Tibial artery (tissue), 4 donors: ENCODE measurements at regions of chr17 and their contacts with region 1.

Region 1: DNA sequence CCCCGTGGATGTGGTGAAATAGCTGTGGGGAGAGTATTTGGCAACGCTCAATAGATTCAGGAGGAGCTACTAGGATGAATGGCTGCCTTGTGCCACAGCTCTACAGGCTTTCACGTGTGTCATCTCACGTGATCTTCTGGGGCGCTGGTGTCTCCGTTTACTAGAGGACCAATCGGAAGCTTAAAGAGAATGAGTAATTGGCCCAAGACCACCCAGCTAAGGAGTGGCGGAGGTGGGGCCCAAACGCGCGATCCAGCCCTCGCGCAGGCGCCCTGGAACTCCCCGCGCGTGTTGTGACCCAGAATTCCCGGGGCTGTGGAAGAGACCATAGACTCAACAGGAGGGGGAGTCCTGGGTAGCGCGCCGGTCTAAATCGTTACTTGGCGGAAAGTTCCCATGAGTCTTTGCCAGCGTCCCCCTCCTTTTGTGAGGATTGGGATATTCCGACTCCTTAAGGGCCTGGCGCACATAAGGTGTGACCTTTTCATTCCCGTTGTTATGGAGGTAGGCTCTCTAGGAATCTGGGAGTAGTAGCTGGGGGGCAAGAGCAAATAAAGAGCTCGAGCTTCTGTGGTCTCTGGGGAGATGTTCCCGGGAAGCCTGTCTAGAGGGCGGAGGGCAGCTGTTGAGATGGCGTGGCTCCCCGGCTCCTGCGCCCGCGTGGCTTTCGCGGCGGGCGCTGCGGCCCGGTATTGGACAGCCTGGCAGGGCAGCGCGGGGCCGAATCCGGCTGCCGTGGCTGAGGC is 23.4 kb downstream of the TRPV2 start:
- DNase-seq: peak; percentile 96 to 98
- H3K4me3 ChIP-seq: peak overlapping the region; percentile 78 to 98
- H3K27ac ChIP-seq: peak overlapping the region; percentile 80 to 83
- H3K4me1 ChIP-seq: peaks cover 0 to 31% (median 30%) of the 10 kb centered on the region in 4 donors
- H3K27me3 ChIP-seq: no peaks in the 10 kb centered on the region
- CTCF ChIP-seq: no peak

Region 2: DNA sequence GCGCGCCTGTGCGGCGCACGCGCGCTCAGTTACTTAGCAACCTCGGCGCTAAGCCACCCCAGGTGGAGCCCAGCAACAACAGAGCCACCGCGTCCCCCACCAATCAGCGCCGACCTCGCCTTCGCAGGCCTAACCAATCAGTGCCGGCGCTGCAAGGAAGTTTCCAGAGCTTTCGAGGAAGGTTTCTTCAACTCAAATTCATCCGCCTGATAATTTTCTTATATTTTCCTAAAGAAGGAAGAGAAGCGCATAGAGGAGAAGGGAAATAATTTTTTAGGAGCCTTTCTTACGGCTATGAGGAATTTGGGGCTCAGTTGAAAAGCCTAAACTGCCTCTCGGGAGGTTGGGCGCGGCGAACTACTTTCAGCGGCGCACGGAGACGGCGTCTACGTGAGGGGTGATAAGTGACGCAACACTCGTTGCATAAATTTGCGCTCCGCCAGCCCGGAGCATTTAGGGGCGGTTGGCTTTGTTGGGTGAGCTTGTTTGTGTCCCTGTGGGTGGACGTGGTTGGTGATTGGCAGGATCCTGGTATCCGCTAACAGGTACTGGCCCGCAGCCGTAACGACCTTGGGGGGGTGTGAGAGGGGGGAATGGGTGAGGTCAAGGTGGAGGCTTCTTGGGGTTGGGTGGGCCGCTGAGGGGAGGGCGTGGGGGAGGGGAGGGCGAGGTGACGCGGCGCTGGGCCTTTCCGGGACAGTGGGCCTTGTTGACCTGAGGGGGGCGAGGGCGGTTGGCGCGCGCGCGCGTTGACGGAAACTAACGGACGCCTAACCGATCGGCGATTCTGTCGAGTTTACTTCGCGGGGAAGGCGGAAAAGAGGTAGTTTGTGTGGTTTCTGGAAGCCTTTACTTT is 57.9 kb before region 1 on chr17 and contains the start of gene UBB:
- intact Hi-C with region 1: loop called (anchors 5 kb)
- DNase-seq: peak; percentile 96 to 98
- H3K4me3 ChIP-seq: peak within 1 kb of the TSS; percentile 74 to 77
- H3K27ac ChIP-seq: peak within 1 kb of the TSS; percentile 88 to 92
- H3K4me1 ChIP-seq: peaks cover 0 to 33% (median 26%) of the 10 kb centered on the region in 4 donors
- H3K27me3 ChIP-seq: no peaks in the 10 kb centered on the region
- CTCF ChIP-seq: no peak

Region 3: GRCh38 chr17:16551878-16552636 is 113.3 kb after region 1 on chr17:
- intact Hi-C with region 1: no loop called
- DNase-seq: no peak
- H3K4me3 ChIP-seq: no peak overlapping the region
- H3K27ac ChIP-seq: no peak overlapping the region
- H3K4me1 ChIP-seq: no peaks in the 10 kb centered on the region
- H3K27me3 ChIP-seq: no peaks in the 10 kb centered on the region
- CTCF ChIP-seq: no peak